Left lung (tissue), 14 donors: ENCODE measurements at regions of chr17 and their contacts with region 1.

Region 1: GRCh38 chr17:5592382-5592781 is 8.1 kb upstream of the NLRP1 start:
- DNase-seq: no peak
- ATAC-seq: peak; percentile 72
- H3K4me3 ChIP-seq: no peak overlapping the region
- H3K27ac ChIP-seq: no peak overlapping the region
- H3K4me1 ChIP-seq: no peaks in the 10 kb centered on the region
- H3K27me3 ChIP-seq: peaks cover 0 to 59% of the 10 kb centered on the region in 2 donors
- CTCF ChIP-seq: peak; percentile 45 to 55

Region 2: DNA sequence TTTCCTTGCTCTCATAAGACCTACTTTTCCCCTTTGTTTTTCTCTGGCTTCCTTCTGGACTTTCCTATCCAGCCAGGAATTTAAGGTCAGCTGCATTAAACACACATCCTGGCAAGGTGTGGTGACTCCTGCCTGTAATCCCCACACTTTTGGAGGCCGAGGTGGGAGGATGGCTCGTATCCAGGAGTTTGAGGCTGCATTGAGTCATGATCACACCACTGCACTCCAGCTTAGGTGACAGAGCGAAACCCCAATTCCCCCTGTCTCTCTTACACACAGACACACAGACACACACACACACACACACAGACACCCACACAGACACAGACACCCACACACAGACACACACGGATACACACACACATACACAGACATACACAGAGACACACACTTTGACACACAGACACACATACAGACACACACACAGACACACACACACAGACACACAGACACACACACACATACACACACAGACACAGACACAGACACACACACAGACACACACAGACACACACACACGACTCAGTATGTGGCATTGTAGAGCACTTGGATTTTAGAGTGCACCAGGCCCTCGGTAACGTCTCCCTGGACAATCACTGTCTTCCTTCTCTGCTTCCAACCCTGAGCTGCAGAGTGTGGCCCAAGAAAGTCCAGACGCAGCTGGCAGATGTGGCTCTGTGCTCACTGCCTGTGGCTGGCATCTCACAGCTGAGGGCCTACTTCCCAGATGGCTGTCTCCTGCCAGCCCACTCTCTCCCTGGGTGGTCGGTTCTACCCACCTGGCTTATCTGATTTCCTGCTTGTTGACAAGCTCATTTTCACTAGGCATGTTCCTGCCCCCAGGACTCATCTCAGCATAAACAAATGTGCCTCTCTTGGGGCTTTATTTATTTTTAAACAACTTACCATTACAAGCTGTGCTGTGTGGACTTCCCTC is 47.1 kb before region 1 on chr17:
- intact Hi-C with region 1: no loop called
- DNase-seq: no peak
- ATAC-seq: no peak
- H3K4me3 ChIP-seq: no peak overlapping the region
- H3K27ac ChIP-seq: no peak overlapping the region
- H3K4me1 ChIP-seq: no peaks in the 10 kb centered on the region
- H3K27me3 ChIP-seq: no peaks in the 10 kb centered on the region
- CTCF ChIP-seq: no peak

Region 3: GRCh38 chr17:5706577-5707216 is 114.3 kb after region 1 on chr17:
- intact Hi-C with region 1: loop called in 1 of 2 experiments (anchors 5 kb)
- DNase-seq: peak in 3 of 4 donors; percentile 16 to 46 (median 41)
- ATAC-seq: peak; percentile 82
- H3K4me3 ChIP-seq: no peak overlapping the region
- H3K27ac ChIP-seq: no peak overlapping the region
- H3K4me1 ChIP-seq: no peaks in the 10 kb centered on the region
- H3K27me3 ChIP-seq: peaks cover 0 to 22% of the 10 kb centered on the region in 2 donors
- CTCF ChIP-seq: peak; percentile 50 to 69

Region 4: GRCh38 chr17:6421700-6422604 is 829.6 kb after region 1 on chr17:
- intact Hi-C with region 1: loop called (anchors 5 to 10 kb)
- DNase-seq: peak; percentile 49 to 89 (median 79)
- ATAC-seq: peak; percentile 95
- H3K4me3 ChIP-seq: no peak overlapping the region
- H3K27ac ChIP-seq: no peak overlapping the region
- H3K4me1 ChIP-seq: no peaks in the 10 kb centered on the region
- H3K27me3 ChIP-seq: peaks cover 0 to 85% of the 10 kb centered on the region in 2 donors
- CTCF ChIP-seq: peak; percentile 64 to 87